ENCODE measurements at regions of chr3 and their contacts with region 1.

Region 1: GRCh38 chr3:111859974-111860859 is 1.2 kb downstream of the PHLDB2 start:
- DNase-seq: peak; percentile 88
- H3K4me3 ChIP-seq: peak overlapping the region; percentile 75 to 95 (median 93)
- H3K27ac ChIP-seq: peak overlapping the region; percentile 98
- H3K4me1 ChIP-seq: peaks cover 46% of the 10 kb centered on the region
- H3K27me3 ChIP-seq: no peaks in the 10 kb centered on the region
- CTCF ChIP-seq: peak; percentile 32 to 41
- POLR2A ChIP-seq: peak; percentile 19

Region 2: DNA sequence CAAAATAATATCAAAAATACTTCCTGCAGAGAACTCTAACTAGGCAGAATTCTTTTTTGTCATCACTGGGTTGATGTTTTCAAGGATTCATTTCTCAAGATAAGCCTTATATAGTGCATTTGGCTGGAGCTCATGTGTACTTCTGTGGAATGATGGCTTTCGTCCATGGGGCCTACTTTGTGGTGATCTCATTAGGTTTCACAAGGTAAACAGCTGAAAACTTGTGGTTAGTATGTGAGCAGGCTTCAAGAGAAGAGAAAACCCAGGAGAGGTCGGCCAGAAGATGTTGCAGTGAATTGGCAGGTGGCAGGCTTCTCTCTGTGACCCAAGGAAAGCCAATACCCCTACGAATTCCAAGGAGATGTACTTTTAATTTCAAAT is 122.5 kb before region 1 on chr3:
- CTCF ChIA-PET with region 1: interaction called, 10 read pairs
- POLR2A ChIA-PET with region 1: interaction called, 8 read pairs
- dilution Hi-C with region 1: loop called (anchors 25 kb)
- intact Hi-C with region 1: no loop called
- DNase-seq: no peak
- H3K4me3 ChIP-seq: no peak overlapping the region
- H3K27ac ChIP-seq: no peak overlapping the region
- H3K4me1 ChIP-seq: peaks cover 17% of the 10 kb centered on the region
- H3K27me3 ChIP-seq: no peaks in the 10 kb centered on the region
- CTCF ChIP-seq: no peak
- POLR2A ChIP-seq: no peak

Region 3: GRCh38 chr3:111761309-111761831 is 98.8 kb before region 1 on chr3:
- CTCF ChIA-PET with region 1: interaction called, 13 read pairs
- POLR2A ChIA-PET with region 1: no interaction called
- dilution Hi-C with region 1: no loop called
- intact Hi-C with region 1: no loop called
- DNase-seq: peak; percentile 29
- H3K4me3 ChIP-seq: no peak overlapping the region
- H3K27ac ChIP-seq: no peak overlapping the region
- H3K4me1 ChIP-seq: no peaks in the 10 kb centered on the region
- H3K27me3 ChIP-seq: no peaks in the 10 kb centered on the region
- CTCF ChIP-seq: no peak
- POLR2A ChIP-seq: no peak

Region 4: GRCh38 chr3:111895079-111895478 is 34.9 kb after region 1 on chr3:
- CTCF ChIA-PET with region 1: interaction called, 30 read pairs
- POLR2A ChIA-PET with region 1: no interaction called
- dilution Hi-C with region 1: no loop called
- intact Hi-C with region 1: loop called (anchors 1 kb)
- DNase-seq: peak; percentile 84
- H3K4me3 ChIP-seq: no peak overlapping the region
- H3K27ac ChIP-seq: no peak overlapping the region
- H3K4me1 ChIP-seq: peaks cover 9% of the 10 kb centered on the region
- H3K27me3 ChIP-seq: no peaks in the 10 kb centered on the region
- CTCF ChIP-seq: peak; percentile 55 to 57
- POLR2A ChIP-seq: no peak

Region 5: GRCh38 chr3:111936191-111936841 is 76.1 kb after region 1 on chr3:
- CTCF ChIA-PET with region 1: interaction called, 10 read pairs
- POLR2A ChIA-PET with region 1: interaction called, 5 read pairs
- dilution Hi-C with region 1: no loop called
- intact Hi-C with region 1: loop called (anchors 1 kb)
- DNase-seq: peak; percentile 84
- H3K4me3 ChIP-seq: peak overlapping the region in 2 of 3 experiments; percentile 15 to 28
- H3K27ac ChIP-seq: peak overlapping the region; percentile 99
- H3K4me1 ChIP-seq: peaks cover 70% of the 10 kb centered on the region
- H3K27me3 ChIP-seq: no peaks in the 10 kb centered on the region
- CTCF ChIP-seq: no peak
- POLR2A ChIP-seq: no peak

Region 6: GRCh38 chr3:112013058-112013783 is 153.0 kb after region 1 on chr3:
- CTCF ChIA-PET with region 1: interaction called, 37 read pairs
- POLR2A ChIA-PET with region 1: no interaction called
- dilution Hi-C with region 1: no loop called
- intact Hi-C with region 1: no loop called
- DNase-seq: peak; percentile 70
- H3K4me3 ChIP-seq: no peak overlapping the region
- H3K27ac ChIP-seq: no peak overlapping the region
- H3K4me1 ChIP-seq: no peaks in the 10 kb centered on the region
- H3K27me3 ChIP-seq: no peaks in the 10 kb centered on the region
- CTCF ChIP-seq: peak; percentile 64 to 69
- POLR2A ChIP-seq: no peak